Transverse colon (tissue), 4 donors: ENCODE measurements at regions of chr9 and their contacts with region 1.

Region 1: GRCh38 chr9:136518623-136519022 is 27.2 kb downstream of the NOTCH1 start:
- DNase-seq: peak; percentile 58
- H3K4me3 ChIP-seq: no peak overlapping the region
- H3K27ac ChIP-seq: peak overlapping the region; percentile 82 to 93 (median 86)
- H3K4me1 ChIP-seq: peaks cover 30 to 50% (median 47%) of the 10 kb centered on the region in 4 donors
- H3K27me3 ChIP-seq: no peaks in the 10 kb centered on the region
- CTCF ChIP-seq: no peak
- EP300 ChIP-seq: no peak
- POLR2A ChIP-seq: no peak

Region 2: GRCh38 chr9:136533775-136534157 is 15.1 kb after region 1 on chr9:
- in situ Hi-C with region 1: no loop called
- intact Hi-C with region 1: loop called (anchors 1 kb)
- DNase-seq: peak; percentile 73
- H3K4me3 ChIP-seq: peak overlapping the region in 1 of 4 donors; percentile 9
- H3K27ac ChIP-seq: peak overlapping the region; percentile 88 to 93 (median 88)
- H3K4me1 ChIP-seq: peaks cover 77 to 94% (median 78%) of the 10 kb centered on the region in 4 donors
- H3K27me3 ChIP-seq: no peaks in the 10 kb centered on the region
- CTCF ChIP-seq: no peak
- EP300 ChIP-seq: no peak
- POLR2A ChIP-seq: no peak